Spleen (tissue), 13 donors: ENCODE measurements at regions of chr1 and their contacts with region 1.

Region 1: DNA sequence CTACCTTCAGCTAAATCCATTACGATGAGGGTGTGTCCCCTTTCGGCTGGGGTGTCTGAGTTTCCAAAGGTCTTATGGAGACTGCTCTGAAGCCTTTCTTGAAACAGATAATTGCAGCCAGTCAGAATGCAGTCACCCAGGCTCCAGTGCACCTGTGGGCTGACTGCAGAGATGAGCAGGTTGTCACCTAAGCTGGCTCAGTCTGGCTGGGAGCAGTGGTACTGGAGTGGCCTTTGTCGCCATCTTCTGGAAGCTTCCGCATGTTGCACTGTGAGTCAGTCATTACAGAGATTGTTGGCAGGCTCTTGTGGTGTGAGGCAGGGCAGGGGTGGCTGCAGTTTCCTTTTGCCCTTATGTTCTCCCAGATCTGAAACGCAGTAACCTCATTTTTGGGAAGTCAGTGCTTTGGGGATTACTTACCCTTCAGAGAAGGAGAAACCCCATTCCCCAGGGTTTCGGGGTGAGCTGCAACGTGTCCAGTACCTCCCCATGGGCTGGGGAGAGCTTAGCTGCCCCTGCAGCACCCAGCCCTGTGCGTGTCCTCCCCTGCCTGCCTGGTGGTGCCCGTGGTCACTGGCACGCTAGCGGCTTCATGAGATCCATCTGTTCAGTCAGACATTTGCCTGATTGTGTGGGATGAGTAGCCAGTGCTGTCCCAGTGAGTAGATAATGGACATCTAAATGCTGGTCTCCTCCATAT is 48.0 kb downstream of the SMYD2 start:
- DNase-seq: peak; percentile 89
- H3K4me3 ChIP-seq: no peak overlapping the region
- H3K27ac ChIP-seq: peak overlapping the region in 1 of 8 donors; percentile 4
- H3K4me1 ChIP-seq: peaks cover 0 to 64% (median 24%) of the 10 kb centered on the region in 6 donors
- H3K27me3 ChIP-seq: no peaks in the 10 kb centered on the region
- CTCF ChIP-seq: peak; percentile 72 to 94 (median 89)
- POLR2A ChIP-seq: no peak

Region 2: DNA sequence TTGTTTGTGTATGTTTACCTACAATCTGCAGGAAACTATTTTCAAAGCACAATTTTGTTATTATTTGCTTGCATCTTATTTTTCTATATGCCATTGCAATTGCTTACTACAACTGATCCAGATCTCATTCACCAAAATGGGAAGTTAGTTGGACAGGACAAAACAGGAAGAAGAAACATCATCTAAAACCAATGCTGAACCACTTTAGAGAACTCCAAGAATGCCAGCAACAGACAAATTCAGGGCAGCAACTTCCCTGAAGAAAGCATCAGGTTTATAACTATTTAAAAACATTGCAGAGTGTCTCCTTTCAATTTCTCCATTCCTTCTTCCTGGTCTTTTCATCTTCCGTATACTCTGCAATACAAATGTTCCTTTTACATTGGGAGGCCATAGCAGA is 130.3 kb before region 1 on chr1:
- intact Hi-C with region 1: no loop called
- DNase-seq: no peak
- H3K4me3 ChIP-seq: no peak overlapping the region
- H3K27ac ChIP-seq: no peak overlapping the region
- H3K4me1 ChIP-seq: no peaks in the 10 kb centered on the region
- H3K27me3 ChIP-seq: peaks cover 0 to 22% (median under 1%) of the 10 kb centered on the region in 7 donors
- CTCF ChIP-seq: no peak
- POLR2A ChIP-seq: no peak

Region 3: DNA sequence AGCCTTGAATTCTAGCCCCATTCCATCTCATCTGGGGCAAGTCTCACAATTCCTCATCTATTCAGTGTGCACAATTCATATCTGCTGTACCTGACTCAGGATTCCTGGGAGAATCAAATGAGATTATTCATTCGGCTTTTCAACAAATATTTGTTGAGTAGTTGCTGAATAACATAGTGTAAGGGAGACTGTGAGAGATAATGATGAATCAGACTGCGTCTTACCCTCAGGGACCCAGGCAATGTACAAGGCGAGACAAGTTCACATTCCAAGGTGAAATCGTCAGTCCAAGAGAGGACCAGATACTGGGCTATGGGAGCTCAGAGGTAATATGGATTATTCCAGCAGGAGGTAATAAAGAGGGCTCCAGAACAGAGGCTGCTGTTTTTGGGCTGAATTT is 115.8 kb before region 1 on chr1:
- intact Hi-C with region 1: loop called (anchors 5 kb)
- DNase-seq: no peak
- H3K4me3 ChIP-seq: no peak overlapping the region
- H3K27ac ChIP-seq: no peak overlapping the region
- H3K4me1 ChIP-seq: peaks cover 0 to 12% (median 5%) of the 10 kb centered on the region in 6 donors
- H3K27me3 ChIP-seq: peaks cover 0 to 4% (median 0%) of the 10 kb centered on the region in 7 donors
- CTCF ChIP-seq: no peak
- POLR2A ChIP-seq: no peak

Region 4: GRCh38 chr1:214264976-214265375 is 63.9 kb before region 1 on chr1:
- intact Hi-C with region 1: loop called (anchors 5 kb)
- DNase-seq: no peak
- H3K4me3 ChIP-seq: no peak overlapping the region
- H3K27ac ChIP-seq: no peak overlapping the region
- H3K4me1 ChIP-seq: peaks cover 0 to 9% (median 6%) of the 10 kb centered on the region in 6 donors
- H3K27me3 ChIP-seq: peaks cover 0 to 86% (median 26%) of the 10 kb centered on the region in 7 donors
- CTCF ChIP-seq: no peak
- POLR2A ChIP-seq: no peak

Region 5: GRCh38 chr1:214281021-214281719 is 47.8 kb before region 1 on chr1 and contains the start of gene SMYD2:
- intact Hi-C with region 1: no loop called
- DNase-seq: peak; percentile 94
- H3K4me3 ChIP-seq: peak within 1 kb of the TSS; percentile 72 to 96 (median 87)
- H3K27ac ChIP-seq: peak within 1 kb of the TSS; percentile 88 to 98 (median 94)
- H3K4me1 ChIP-seq: peaks cover 6 to 65% (median 31%) of the 10 kb centered on the region in 6 donors
- H3K27me3 ChIP-seq: no peaks in the 10 kb centered on the region
- CTCF ChIP-seq: no peak
- POLR2A ChIP-seq: peak in 1 of 3 donors; percentile 31
- total RNA-seq, gene SMYD2: 24.4 to 39.7 (median 34.0) TPM

Region 6: GRCh38 chr1:214584805-214585766 is 256.2 kb after region 1 on chr1:
- intact Hi-C with region 1: loop called (anchors 5 kb)
- DNase-seq: no peak
- H3K4me3 ChIP-seq: no peak overlapping the region
- H3K27ac ChIP-seq: no peak overlapping the region
- H3K4me1 ChIP-seq: no peaks in the 10 kb centered on the region
- H3K27me3 ChIP-seq: peaks cover 0 to 12% (median 0%) of the 10 kb centered on the region in 7 donors
- CTCF ChIP-seq: peak in 7 of 11 experiments; percentile 29 to 57 (median 43)
- POLR2A ChIP-seq: no peak